CD8-positive, alpha-beta T cell (primary cell): ENCODE measurements at regions of chr16 and their contacts with region 1.

Region 1: GRCh38 chr16:87895641-87896141 is 26.4 kb upstream of the SLC7A5 start:
- DNase-seq: peak in 8 of 9 experiments; percentile 50 to 85 (median 72)
- ATAC-seq: peak; percentile 75
- H3K4me3 ChIP-seq: no peak overlapping the region
- H3K4me3 Mint-ChIP-seq: peak overlapping the region; percentile 54
- H3K27ac ChIP-seq: peak overlapping the region in 1 of 2 experiments; percentile 53
- H3K27ac Mint-ChIP-seq: peak overlapping the region; percentile 91
- H3K4me1 ChIP-seq: peaks cover 38% of the 10 kb centered on the region
- H3K4me1 Mint-ChIP-seq: peaks cover 35% of the 10 kb centered on the region
- H3K27me3 ChIP-seq: no peaks in the 10 kb centered on the region
- H3K27me3 Mint-ChIP-seq: no peaks in the 10 kb centered on the region
- CTCF ChIP-seq: no peak

Region 2: DNA sequence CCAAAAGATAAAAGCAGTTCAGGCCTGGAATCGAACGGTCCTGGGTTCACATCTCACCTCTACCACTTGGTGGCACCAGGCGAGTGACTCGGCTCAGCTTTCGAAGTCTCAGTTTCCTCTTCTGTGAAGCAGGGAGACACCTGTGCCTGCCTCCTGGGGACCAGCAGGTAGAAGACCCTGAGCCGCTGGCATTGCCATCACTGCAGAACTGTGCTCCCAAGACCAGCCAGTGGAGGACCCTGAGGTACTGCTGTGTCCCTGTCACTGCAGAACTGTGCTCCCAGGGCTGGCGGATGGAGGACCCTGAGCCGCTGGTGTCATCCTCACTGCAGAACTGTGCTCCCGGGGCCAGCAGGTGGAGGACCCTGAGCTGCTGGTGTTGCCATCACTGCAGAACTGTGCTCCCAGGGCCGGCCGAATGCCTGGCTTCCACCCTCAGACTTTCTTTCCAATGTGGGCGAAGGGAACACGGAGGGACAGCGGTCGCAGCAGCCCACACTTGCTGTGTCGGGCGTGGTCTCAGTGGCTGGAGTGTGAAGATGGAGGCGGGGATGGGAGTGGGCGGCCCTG is 17.7 kb before region 1 on chr16:
- CTCF ChIA-PET with region 1: interaction called, 3 read pairs
- POLR2A ChIA-PET with region 1: interaction called, 5 read pairs
- intact Hi-C with region 1: loop called in 1 of 2 experiments (anchors 2 kb)
- DNase-seq: peak in 1 of 9 experiments; percentile 46
- ATAC-seq: no peak
- H3K4me3 ChIP-seq: no peak overlapping the region
- H3K4me3 Mint-ChIP-seq: no peak overlapping the region
- H3K27ac ChIP-seq: no peak overlapping the region
- H3K27ac Mint-ChIP-seq: no peak overlapping the region
- H3K4me1 ChIP-seq: peaks cover 6% of the 10 kb centered on the region
- H3K4me1 Mint-ChIP-seq: peaks cover 8% of the 10 kb centered on the region
- H3K27me3 ChIP-seq: peaks cover 0 to 2% of the 10 kb centered on the region in 2 experiments
- H3K27me3 Mint-ChIP-seq: no peaks in the 10 kb centered on the region
- CTCF ChIP-seq: no peak

Region 3: GRCh38 chr16:88347656-88348376 is 452.1 kb after region 1 on chr16:
- CTCF ChIA-PET with region 1: no interaction called
- POLR2A ChIA-PET with region 1: no interaction called
- intact Hi-C with region 1: no loop called
- DNase-seq: peak in 8 of 9 experiments; percentile 4 to 54 (median 28)
- ATAC-seq: no peak
- H3K4me3 ChIP-seq: no peak overlapping the region
- H3K4me3 Mint-ChIP-seq: no peak overlapping the region
- H3K27ac ChIP-seq: no peak overlapping the region
- H3K27ac Mint-ChIP-seq: no peak overlapping the region
- H3K4me1 ChIP-seq: peaks cover 10% of the 10 kb centered on the region
- H3K4me1 Mint-ChIP-seq: peaks cover 9% of the 10 kb centered on the region
- H3K27me3 ChIP-seq: no peaks in the 10 kb centered on the region
- H3K27me3 Mint-ChIP-seq: no peaks in the 10 kb centered on the region
- CTCF ChIP-seq: no peak